ENCODE measurements at regions of chr11 and their contacts with region 1.

Region 1: DNA sequence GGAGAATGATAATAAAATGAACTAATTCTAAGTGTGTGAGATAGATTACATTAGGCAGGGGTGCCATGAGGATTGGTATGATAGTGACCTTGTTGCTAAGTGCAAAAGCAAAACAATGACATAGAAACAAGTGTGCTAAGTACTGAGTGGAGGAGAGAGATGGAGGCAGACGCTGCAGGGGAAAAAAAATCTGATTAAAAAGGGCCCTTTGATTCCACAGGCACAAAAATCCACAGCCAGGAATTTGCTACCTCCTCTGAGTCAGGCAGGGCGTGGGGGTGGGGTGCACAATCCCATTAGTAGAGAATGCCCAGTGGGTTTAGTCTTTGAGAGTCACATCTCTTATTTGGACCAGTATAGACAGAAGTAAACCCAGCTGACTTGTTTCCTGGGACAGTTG is at the start of gene CNTF:
- DNase-seq: no peak
- ATAC-seq: no peak
- H3K4me3 Mint-ChIP-seq: no peak within 1 kb of the TSS
- H3K27ac Mint-ChIP-seq: peak within 1 kb of the TSS; percentile 66
- H3K4me1 Mint-ChIP-seq: peaks cover 29% of the 10 kb centered on the region
- H3K27me3 Mint-ChIP-seq: no peaks in the 10 kb centered on the region
- total RNA-seq, gene CNTF: 1.6 to 3.4 TPM

Region 2: DNA sequence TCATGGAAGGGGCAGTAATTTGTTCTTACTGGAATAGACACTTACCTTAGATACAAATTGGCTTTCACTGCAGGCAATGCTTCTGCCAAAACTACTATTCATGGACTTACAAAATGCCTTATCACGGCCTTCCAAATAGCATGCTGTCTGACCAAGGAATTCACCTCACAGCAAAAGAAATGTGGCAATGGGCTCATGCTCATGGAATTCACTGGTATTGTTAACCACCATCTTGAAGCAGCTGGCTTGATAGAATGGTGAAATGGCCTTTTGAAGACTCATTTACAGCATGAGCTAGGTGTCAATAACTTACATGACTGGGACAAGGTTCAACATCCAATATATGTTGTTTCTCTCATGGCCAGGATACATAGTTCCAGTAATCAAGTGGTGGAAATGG is 136.4 kb before region 1 on chr11:
- CTCF ChIA-PET with region 1: no interaction called
- POLR2A ChIA-PET with region 1: no interaction called
- intact Hi-C with region 1: no loop called
- DNase-seq: no peak
- ATAC-seq: no peak
- H3K4me3 Mint-ChIP-seq: no peak overlapping the region
- H3K27ac Mint-ChIP-seq: no peak overlapping the region
- H3K4me1 Mint-ChIP-seq: no peaks in the 10 kb centered on the region
- H3K27me3 Mint-ChIP-seq: no peaks in the 10 kb centered on the region

Region 3: DNA sequence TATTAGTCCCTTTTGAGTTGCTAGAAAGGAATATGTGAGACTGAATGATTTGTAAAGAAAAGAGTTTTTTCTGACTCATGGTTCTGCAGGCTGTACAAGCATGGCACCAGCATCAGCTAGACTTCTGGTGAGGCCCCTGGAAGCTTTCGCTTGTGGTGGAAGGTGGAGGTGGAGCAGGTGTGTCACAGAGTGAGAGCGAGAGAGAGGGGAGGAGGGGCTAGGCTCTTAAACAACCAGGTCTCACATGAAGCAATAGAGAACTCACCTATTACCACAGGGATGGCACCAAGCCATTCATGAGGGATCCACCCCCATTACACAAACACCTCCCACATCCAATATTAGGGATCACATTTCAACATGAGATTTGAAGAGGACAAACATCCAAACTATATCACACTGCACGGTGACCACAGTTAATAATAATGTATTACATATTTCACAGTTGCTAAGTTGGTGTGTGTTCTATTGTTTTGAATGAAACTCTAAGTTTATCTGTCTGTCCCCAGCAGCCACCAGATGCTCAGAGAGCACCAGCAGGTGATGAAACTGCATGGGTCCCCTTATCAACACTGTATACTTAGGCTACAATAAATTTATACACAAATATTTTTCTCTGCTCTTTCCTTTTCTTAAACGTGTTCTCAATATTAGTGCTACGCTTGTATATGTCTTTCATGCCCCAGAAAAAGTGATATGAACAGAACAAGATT is 29.4 kb before region 1 on chr11:
- CTCF ChIA-PET with region 1: interaction called, 3 read pairs
- POLR2A ChIA-PET with region 1: no interaction called
- intact Hi-C with region 1: loop called in 1 of 2 experiments (anchors 2 kb)
- DNase-seq: peak; percentile 78
- ATAC-seq: peak; percentile 91
- H3K4me3 Mint-ChIP-seq: peak overlapping the region; percentile 0
- H3K27ac Mint-ChIP-seq: peak overlapping the region; percentile 84
- H3K4me1 Mint-ChIP-seq: peaks cover 82% of the 10 kb centered on the region
- H3K27me3 Mint-ChIP-seq: no peaks in the 10 kb centered on the region

Region 4: DNA sequence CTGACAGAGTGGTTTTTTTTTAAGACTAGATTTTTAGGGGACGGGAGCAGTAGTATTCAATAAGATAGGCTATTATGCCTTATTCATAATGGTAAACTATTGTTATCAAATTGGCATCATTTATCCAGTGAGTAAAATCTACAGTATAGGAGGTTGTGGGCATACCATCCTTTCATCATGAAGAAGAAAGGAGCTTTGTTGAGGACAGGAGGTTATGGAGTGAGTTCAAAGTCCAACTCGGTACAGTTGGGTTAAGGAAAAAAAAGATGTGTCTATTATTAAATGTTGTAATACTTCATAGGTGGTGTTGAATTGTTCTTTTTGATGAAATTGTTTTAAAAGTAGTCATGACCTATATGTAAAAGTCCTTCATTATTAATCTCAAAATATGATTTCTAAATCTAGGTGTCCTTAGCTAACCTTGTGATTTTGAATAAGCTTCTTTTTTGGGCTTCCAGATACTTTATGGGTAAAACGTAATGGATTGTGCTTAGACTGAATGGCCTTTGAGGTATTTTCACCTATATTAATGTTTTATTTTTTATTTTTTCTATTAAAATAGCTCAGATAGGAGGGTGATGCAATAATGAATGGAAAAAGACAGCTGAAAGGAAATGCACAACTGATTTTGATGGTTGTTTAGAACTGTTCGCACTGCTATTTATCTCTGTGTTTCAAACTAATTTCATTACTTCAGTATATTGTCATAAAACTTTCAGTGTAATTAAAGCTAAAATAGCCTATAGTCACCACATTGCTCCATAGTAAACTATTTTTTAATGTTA is 15.2 kb before region 1 on chr11:
- CTCF ChIA-PET with region 1: interaction called, 7 read pairs
- POLR2A ChIA-PET with region 1: no interaction called
- intact Hi-C with region 1: loop called in 1 of 2 experiments (anchors 2 kb)
- DNase-seq: no peak
- ATAC-seq: no peak
- H3K4me3 Mint-ChIP-seq: no peak overlapping the region
- H3K27ac Mint-ChIP-seq: peak overlapping the region; percentile 55
- H3K4me1 Mint-ChIP-seq: peaks cover 74% of the 10 kb centered on the region
- H3K27me3 Mint-ChIP-seq: no peaks in the 10 kb centered on the region

Region 5: GRCh38 chr11:58675334-58676155 is 53.2 kb after region 1 on chr11:
- CTCF ChIA-PET with region 1: no interaction called
- POLR2A ChIA-PET with region 1: interaction called, 5 read pairs
- intact Hi-C with region 1: loop called in 1 of 2 experiments (anchors 5 kb)
- DNase-seq: peak; percentile 88
- ATAC-seq: peak; percentile 94
- H3K4me3 Mint-ChIP-seq: no peak overlapping the region
- H3K27ac Mint-ChIP-seq: no peak overlapping the region
- H3K4me1 Mint-ChIP-seq: no peaks in the 10 kb centered on the region
- H3K27me3 Mint-ChIP-seq: no peaks in the 10 kb centered on the region

Region 6: DNA sequence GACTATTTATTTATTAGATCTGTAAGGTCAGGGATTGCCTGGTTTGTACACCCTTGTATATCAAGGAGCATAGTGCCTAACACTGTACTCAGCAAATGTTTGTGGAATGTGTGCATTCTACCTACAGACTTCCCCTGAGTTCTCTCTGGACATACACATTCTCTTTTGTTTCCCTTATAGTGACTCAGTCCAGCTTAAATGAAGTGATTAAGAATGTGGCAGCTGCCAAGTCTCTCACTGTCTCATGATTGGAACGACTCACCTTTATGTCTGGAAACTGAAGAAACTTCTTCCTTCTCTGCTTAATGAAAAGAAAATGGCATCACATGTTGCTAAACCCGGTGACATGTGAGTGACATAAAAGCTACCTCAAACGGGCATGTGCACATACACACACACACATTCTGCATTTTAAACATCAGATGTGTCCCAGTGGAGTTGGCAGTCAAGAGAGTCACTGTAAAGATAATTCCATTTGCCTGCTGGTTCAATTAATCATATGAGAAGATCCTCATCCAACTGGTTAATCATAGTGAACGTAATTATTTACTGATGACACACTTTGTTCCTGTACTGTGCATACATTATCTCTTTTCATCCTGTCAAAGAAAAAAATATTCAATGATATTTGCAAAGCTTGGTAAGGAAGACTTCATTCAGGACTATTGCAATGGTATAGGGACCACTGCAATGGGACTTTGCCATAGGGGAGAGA is 66.6 kb after region 1 on chr11:
- CTCF ChIA-PET with region 1: no interaction called
- POLR2A ChIA-PET with region 1: no interaction called
- intact Hi-C with region 1: no loop called
- DNase-seq: no peak
- ATAC-seq: peak; percentile 63
- H3K4me3 Mint-ChIP-seq: no peak overlapping the region
- H3K27ac Mint-ChIP-seq: no peak overlapping the region
- H3K4me1 Mint-ChIP-seq: peaks cover 13% of the 10 kb centered on the region
- H3K27me3 Mint-ChIP-seq: no peaks in the 10 kb centered on the region

Region 7: GRCh38 chr11:58745705-58746364 is 123.5 kb after region 1 on chr11:
- CTCF ChIA-PET with region 1: no interaction called
- POLR2A ChIA-PET with region 1: no interaction called
- intact Hi-C with region 1: no loop called
- DNase-seq: no peak
- ATAC-seq: no peak
- H3K4me3 Mint-ChIP-seq: no peak overlapping the region
- H3K27ac Mint-ChIP-seq: no peak overlapping the region
- H3K4me1 Mint-ChIP-seq: peaks cover 9% of the 10 kb centered on the region
- H3K27me3 Mint-ChIP-seq: peaks cover 2% of the 10 kb centered on the region

Measured in activated CD4-positive, alpha-beta T cell treated with anti-CD3 and anti-CD28 coated beads for 36 hours (primary cell).